ENCODE measurements at regions of chr3 and their contacts with region 1.

Region 1: GRCh38 chr3:51995346-51996163 is at the start of gene RPL29:
- DNase-seq: peak; percentile 94
- H3K4me3 Mint-ChIP-seq: peak within 1 kb of the TSS; percentile 100
- H3K27ac Mint-ChIP-seq: peak within 1 kb of the TSS; percentile 99
- H3K4me1 Mint-ChIP-seq: peaks cover 46% of the 10 kb centered on the region
- H3K27me3 Mint-ChIP-seq: peaks cover 10% of the 10 kb centered on the region
- total RNA-seq, gene RPL29: 1,042 to 1,047 TPM

Region 2: GRCh38 chr3:51941798-51942602 is 53.6 kb before region 1 on chr3 and contains the starts of genes PARP3 and RRP9:
- CTCF ChIA-PET with region 1: interaction called, 16 read pairs
- POLR2A ChIA-PET with region 1: interaction called, 29 read pairs
- DNase-seq: peak; percentile 100
- H3K4me3 Mint-ChIP-seq: peak within 1 kb of the TSS; percentile 83
- H3K27ac Mint-ChIP-seq: peak within 1 kb of the TSS; percentile 84
- H3K4me1 Mint-ChIP-seq: peaks cover 33% of the 10 kb centered on the region
- H3K27me3 Mint-ChIP-seq: no peaks in the 10 kb centered on the region
- total RNA-seq, gene PARP3: 13.2 to 13.9 TPM
- total RNA-seq, gene RRP9: 16.8 to 17.5 TPM

Region 3: GRCh38 chr3:51974963-51975851 is 20.3 kb before region 1 on chr3 and contains the start of gene ABHD14A:
- CTCF ChIA-PET with region 1: interaction called, 7 read pairs
- POLR2A ChIA-PET with region 1: interaction called, 19 read pairs
- DNase-seq: peak; percentile 74
- H3K4me3 Mint-ChIP-seq: peak within 1 kb of the TSS; percentile 98
- H3K27ac Mint-ChIP-seq: peak within 1 kb of the TSS; percentile 91
- H3K4me1 Mint-ChIP-seq: peaks cover 43% of the 10 kb centered on the region
- H3K27me3 Mint-ChIP-seq: no peaks in the 10 kb centered on the region
- total RNA-seq, gene ABHD14A: 10.8 to 13.3 TPM

Region 4: GRCh38 chr3:51982782-51983577 is 12.6 kb before region 1 on chr3 and contains the start of gene ACY1:
- CTCF ChIA-PET with region 1: interaction called, 14 read pairs
- POLR2A ChIA-PET with region 1: interaction called, 78 read pairs
- DNase-seq: peak; percentile 79
- H3K4me3 Mint-ChIP-seq: peak within 1 kb of the TSS; percentile 97
- H3K27ac Mint-ChIP-seq: peak within 1 kb of the TSS; percentile 92
- H3K4me1 Mint-ChIP-seq: peaks cover 31% of the 10 kb centered on the region
- H3K27me3 Mint-ChIP-seq: no peaks in the 10 kb centered on the region
- total RNA-seq, gene ACY1: 18.4 to 22.0 TPM

Region 5: GRCh38 chr3:52154117-52155094 is 158.9 kb after region 1 on chr3 and contains the start of gene POC1A:
- CTCF ChIA-PET with region 1: interaction called, 6 read pairs
- POLR2A ChIA-PET with region 1: interaction called, 17 read pairs
- DNase-seq: peak; percentile 91
- H3K4me3 Mint-ChIP-seq: peak within 1 kb of the TSS; percentile 85
- H3K27ac Mint-ChIP-seq: peak within 1 kb of the TSS; percentile 89
- H3K4me1 Mint-ChIP-seq: peaks cover 29% of the 10 kb centered on the region
- H3K27me3 Mint-ChIP-seq: peaks cover 2% of the 10 kb centered on the region
- total RNA-seq, gene POC1A: 24.8 to 25.6 TPM

Measured in activated CD4-positive, alpha-beta memory T cell treated with anti-CD3 and anti-CD28 coated beads, Interleukin-2, amount 10 ng/mL, durations not matched to agents 7 days and 5 days (primary cell).